A673 (cell line): ENCODE measurements at regions of chr2 and their contacts with region 1.

Region 1: DNA sequence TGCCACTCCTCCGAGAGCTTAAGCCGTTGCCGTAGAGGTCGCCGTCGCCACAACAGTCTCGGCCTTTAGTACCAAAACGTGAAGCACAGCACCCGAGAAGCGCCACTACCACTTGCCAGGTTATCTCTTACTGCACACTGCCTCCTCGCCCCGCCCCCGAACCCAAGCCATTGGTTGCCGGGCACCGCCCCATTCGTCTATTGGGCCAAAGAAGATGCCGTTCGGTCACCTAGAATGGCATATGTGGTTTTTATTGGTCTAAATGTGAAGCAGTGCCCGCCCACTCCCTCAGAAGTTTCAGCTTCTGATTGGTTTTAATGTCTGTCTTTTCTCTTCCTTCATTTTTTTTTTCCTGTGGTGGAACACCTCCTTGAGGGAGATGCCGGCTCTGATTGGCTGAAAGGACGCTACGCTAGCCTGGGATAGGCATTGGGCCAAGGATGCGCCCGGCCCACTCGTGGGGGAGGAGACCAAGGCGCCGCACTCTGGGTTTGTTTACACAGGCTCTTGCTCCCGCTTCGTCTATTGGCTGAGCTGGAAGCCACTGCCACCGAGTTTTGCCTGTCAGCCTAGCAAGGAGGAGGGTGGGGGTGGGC is at the start of gene PAIP2B:
- DNase-seq: peak; percentile 99
- H3K4me3 ChIP-seq: peak within 1 kb of the TSS; percentile 58
- H3K27ac ChIP-seq: peak within 1 kb of the TSS; percentile 71
- H3K4me1 ChIP-seq: peaks cover 13% of the 10 kb centered on the region
- H3K27me3 ChIP-seq: peaks cover 4% of the 10 kb centered on the region
- CTCF ChIP-seq: 0 out of 2 replicates have a peak, but pooled peaks have one; percentile 4
- total RNA-seq, gene PAIP2B: 1.1 and 2.3 TPM in 2 replicates

Region 2: DNA sequence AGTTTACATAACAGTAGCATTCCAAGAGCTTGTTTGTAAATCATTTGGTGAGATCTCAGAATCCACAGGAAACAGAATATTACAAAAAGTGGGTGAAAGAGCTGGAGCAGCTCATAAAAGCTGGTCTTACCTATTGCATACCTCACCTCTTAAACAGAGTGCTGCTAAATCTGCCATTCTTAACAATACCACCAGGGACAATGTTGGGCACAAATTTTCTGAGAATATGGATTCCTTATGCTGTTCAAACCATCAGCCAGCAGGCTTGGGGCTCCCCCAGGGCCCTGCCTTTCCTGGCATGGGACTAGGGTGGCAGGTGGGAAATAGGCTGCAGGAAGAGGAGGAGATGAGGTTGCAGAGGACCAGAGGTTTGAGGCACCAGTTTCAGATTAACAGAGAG is 729.0 kb before region 1 on chr2:
- CTCF ChIA-PET with region 1: no interaction called
- POLR2A ChIA-PET with region 1: no interaction called
- intact Hi-C with region 1: no loop called
- DNase-seq: no peak
- H3K4me3 ChIP-seq: no peak overlapping the region
- H3K27ac ChIP-seq: no peak overlapping the region
- H3K4me1 ChIP-seq: no peaks in the 10 kb centered on the region
- H3K27me3 ChIP-seq: peaks cover 65% of the 10 kb centered on the region
- CTCF ChIP-seq: peak; percentile 36; the same call in 1 of the 2 replicates

Region 3: DNA sequence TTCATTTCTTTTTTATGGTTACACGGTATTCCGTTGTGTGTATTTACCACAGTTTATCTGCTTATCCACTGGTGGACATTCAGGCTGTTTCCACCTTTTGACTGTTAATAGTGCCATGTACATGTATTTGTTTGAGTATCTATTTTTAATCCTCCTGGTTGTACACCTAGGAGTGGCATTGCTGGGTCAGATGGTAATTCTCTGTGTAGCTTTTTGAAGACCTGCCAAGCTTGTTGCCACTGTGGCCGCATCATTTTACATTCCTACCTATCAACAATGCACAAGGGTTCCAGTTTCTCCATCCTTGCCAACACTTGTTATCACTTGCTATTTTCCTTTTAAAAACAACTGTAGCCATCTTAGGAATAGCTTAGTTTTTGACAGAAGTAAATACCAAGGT is 83.3 kb before region 1 on chr2:
- CTCF ChIA-PET with region 1: no interaction called
- POLR2A ChIA-PET with region 1: interaction called, 11 read pairs
- intact Hi-C with region 1: no loop called
- DNase-seq: no peak
- H3K4me3 ChIP-seq: no peak overlapping the region
- H3K27ac ChIP-seq: no peak overlapping the region
- H3K4me1 ChIP-seq: no peaks in the 10 kb centered on the region
- H3K27me3 ChIP-seq: no peaks in the 10 kb centered on the region
- CTCF ChIP-seq: no peak

Region 4: DNA sequence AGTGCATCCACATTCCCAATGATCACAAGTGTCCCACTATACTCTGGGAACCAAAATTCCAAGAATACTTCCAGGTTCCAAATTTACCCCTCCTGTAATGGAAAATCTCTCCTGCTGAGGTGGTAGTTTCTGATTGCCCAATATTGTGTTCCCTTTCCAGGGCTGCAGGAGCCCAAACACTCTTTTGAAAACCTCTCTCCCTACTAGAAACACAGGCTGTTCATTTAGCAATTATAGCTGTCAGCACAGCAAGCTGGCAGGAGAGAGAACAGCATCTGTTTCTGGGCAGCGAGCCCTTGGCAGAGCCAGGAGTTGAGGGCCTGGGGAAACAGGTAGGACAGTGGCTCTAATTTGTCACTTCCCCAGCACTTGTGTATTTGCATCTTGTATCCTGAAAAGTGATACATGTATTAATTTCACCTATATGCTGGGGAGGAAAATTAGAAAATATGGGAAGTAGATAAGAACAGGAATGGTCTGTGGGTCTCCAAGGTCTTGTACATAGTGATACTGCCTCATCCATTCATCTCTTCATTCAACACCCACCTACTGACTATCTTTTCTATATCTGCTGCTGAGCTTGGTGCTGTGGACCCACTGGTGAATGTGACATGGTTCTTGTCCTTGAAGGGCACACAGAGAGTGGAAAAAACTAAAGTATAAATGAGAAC is 16.7 kb after region 1 on chr2:
- CTCF ChIA-PET with region 1: no interaction called
- POLR2A ChIA-PET with region 1: interaction called, 14 read pairs
- intact Hi-C with region 1: no loop called
- DNase-seq: no peak
- H3K4me3 ChIP-seq: no peak overlapping the region
- H3K27ac ChIP-seq: no peak overlapping the region
- H3K4me1 ChIP-seq: no peaks in the 10 kb centered on the region
- H3K27me3 ChIP-seq: peaks cover 29% of the 10 kb centered on the region
- CTCF ChIP-seq: no peak

Region 5: GRCh38 chr2:71336384-71336783 is 109.3 kb after region 1 on chr2:
- CTCF ChIA-PET with region 1: interaction called, 9 read pairs
- POLR2A ChIA-PET with region 1: interaction called, 10 read pairs
- intact Hi-C with region 1: no loop called
- DNase-seq: no peak
- H3K4me3 ChIP-seq: no peak overlapping the region
- H3K27ac ChIP-seq: no peak overlapping the region
- H3K4me1 ChIP-seq: peaks cover 29% of the 10 kb centered on the region
- H3K27me3 ChIP-seq: no peaks in the 10 kb centered on the region
- CTCF ChIP-seq: no peak

Region 6: GRCh38 chr2:71530641-71531332 is 303.7 kb after region 1 on chr2:
- CTCF ChIA-PET with region 1: no interaction called
- POLR2A ChIA-PET with region 1: no interaction called
- intact Hi-C with region 1: no loop called
- DNase-seq: peak; percentile 75
- H3K4me3 ChIP-seq: no peak overlapping the region
- H3K27ac ChIP-seq: no peak overlapping the region
- H3K4me1 ChIP-seq: no peaks in the 10 kb centered on the region
- H3K27me3 ChIP-seq: no peaks in the 10 kb centered on the region
- CTCF ChIP-seq: peak; percentile 76